Body of pancreas (tissue), 4 donors: ENCODE measurements at regions of chrX and their contacts with region 1.

Region 1: GRCh38 chrX:15468036-15468435 is 25.1 kb downstream of the PIR start:
- DNase-seq: peak; percentile 8 to 14 (median 11)
- ATAC-seq: peak; percentile 48
- H3K4me3 ChIP-seq: no peak overlapping the region
- H3K27ac ChIP-seq: no peak overlapping the region
- H3K4me1 ChIP-seq: no peaks in the 10 kb centered on the region
- H3K27me3 ChIP-seq: no peaks in the 10 kb centered on the region
- CTCF ChIP-seq: peak in 5 of 7 experiments; percentile 14 to 59 (median 46)
- POLR2A ChIP-seq: no peak

Region 2: DNA sequence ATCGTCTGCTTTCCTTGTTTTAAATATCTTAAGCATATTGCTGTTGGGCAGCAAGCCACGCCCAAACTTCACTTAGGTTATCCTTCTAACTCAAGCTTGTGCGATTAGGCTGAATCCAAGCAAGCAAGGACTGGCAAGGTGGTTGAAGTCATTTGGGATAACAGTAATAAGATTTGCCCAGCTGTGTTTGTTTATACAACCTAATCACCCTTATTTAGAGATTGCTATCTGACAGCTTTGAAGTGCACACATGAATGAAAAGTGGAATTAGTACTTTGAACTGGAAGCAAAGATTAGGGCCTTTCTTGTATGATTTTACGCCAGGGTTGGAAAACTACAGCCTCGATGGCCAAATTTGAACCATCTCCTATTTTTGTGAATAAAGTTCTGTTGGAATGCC is 380.3 kb before region 1 on chrX:
- intact Hi-C with region 1: no loop called
- DNase-seq: peak in 1 of 4 donors; percentile 13
- ATAC-seq: no peak
- H3K4me3 ChIP-seq: no peak overlapping the region
- H3K27ac ChIP-seq: no peak overlapping the region
- H3K4me1 ChIP-seq: no peaks in the 10 kb centered on the region
- H3K27me3 ChIP-seq: no peaks in the 10 kb centered on the region
- CTCF ChIP-seq: no peak
- POLR2A ChIP-seq: no peak

Region 3: GRCh38 chrX:15356444-15356843 is 111.6 kb before region 1 on chrX:
- intact Hi-C with region 1: loop called (anchors 10 kb)
- DNase-seq: no peak
- ATAC-seq: no peak
- H3K4me3 ChIP-seq: no peak overlapping the region
- H3K27ac ChIP-seq: no peak overlapping the region
- H3K4me1 ChIP-seq: no peaks in the 10 kb centered on the region
- H3K27me3 ChIP-seq: no peaks in the 10 kb centered on the region
- CTCF ChIP-seq: no peak
- POLR2A ChIP-seq: no peak